Endothelial cell of umbilical vein (primary cell): ENCODE measurements at regions of chr6 and their contacts with region 1.

Region 1: GRCh38 chr6:41182069-41183034 is 18.6 kb downstream of the TREML2 start:
- DNase-seq: peak; percentile 73
- H3K4me3 ChIP-seq: no peak overlapping the region
- H3K27ac ChIP-seq: no peak overlapping the region
- H3K4me1 ChIP-seq: no peaks in the 10 kb centered on the region
- H3K27me3 ChIP-seq: peaks cover under 1 to 2% of the 10 kb centered on the region in 2 experiments
- CTCF ChIP-seq: peak; percentile 67 to 69
- POLR2A ChIP-seq: no peak

Region 2: GRCh38 chr6:41072676-41073623 is 109.4 kb before region 1 on chr6 and contains the start of gene NFYA:
- CTCF ChIA-PET with region 1: interaction called, 13 read pairs
- POLR2A ChIA-PET with region 1: no interaction called
- dilution Hi-C with region 1: no loop called
- intact Hi-C with region 1: no loop called
- DNase-seq: peak; percentile 100
- H3K4me3 ChIP-seq: peak within 1 kb of the TSS; percentile 84 to 97 (median 90)
- H3K27ac ChIP-seq: peak within 1 kb of the TSS; percentile 98
- H3K4me1 ChIP-seq: peaks cover 21% of the 10 kb centered on the region
- H3K27me3 ChIP-seq: no peaks in the 10 kb centered on the region
- CTCF ChIP-seq: peak; percentile 11 to 29
- POLR2A ChIP-seq: peak; percentile 72
- total RNA-seq, gene NFYA: 29.0 and 30.9 TPM in 2 replicates

Region 3: GRCh38 chr6:41092421-41093140 is 89.8 kb before region 1 on chr6:
- CTCF ChIA-PET with region 1: interaction called, 89 read pairs
- POLR2A ChIA-PET with region 1: no interaction called
- dilution Hi-C with region 1: no loop called
- intact Hi-C with region 1: loop called (anchors 1 kb)
- DNase-seq: peak; percentile 36
- H3K4me3 ChIP-seq: no peak overlapping the region
- H3K27ac ChIP-seq: no peak overlapping the region
- H3K4me1 ChIP-seq: peaks cover 16% of the 10 kb centered on the region
- H3K27me3 ChIP-seq: no peaks in the 10 kb centered on the region
- CTCF ChIP-seq: peak; percentile 9 to 39
- POLR2A ChIP-seq: no peak

Region 4: GRCh38 chr6:41100871-41101287 is 81.5 kb before region 1 on chr6:
- CTCF ChIA-PET with region 1: interaction called, 15 read pairs
- POLR2A ChIA-PET with region 1: no interaction called
- dilution Hi-C with region 1: no loop called
- intact Hi-C with region 1: loop called (anchors 1 kb)
- DNase-seq: no peak
- H3K4me3 ChIP-seq: no peak overlapping the region
- H3K27ac ChIP-seq: no peak overlapping the region
- H3K4me1 ChIP-seq: peaks cover 29% of the 10 kb centered on the region
- H3K27me3 ChIP-seq: no peaks in the 10 kb centered on the region
- CTCF ChIP-seq: no peak
- POLR2A ChIP-seq: no peak

Region 5: DNA sequence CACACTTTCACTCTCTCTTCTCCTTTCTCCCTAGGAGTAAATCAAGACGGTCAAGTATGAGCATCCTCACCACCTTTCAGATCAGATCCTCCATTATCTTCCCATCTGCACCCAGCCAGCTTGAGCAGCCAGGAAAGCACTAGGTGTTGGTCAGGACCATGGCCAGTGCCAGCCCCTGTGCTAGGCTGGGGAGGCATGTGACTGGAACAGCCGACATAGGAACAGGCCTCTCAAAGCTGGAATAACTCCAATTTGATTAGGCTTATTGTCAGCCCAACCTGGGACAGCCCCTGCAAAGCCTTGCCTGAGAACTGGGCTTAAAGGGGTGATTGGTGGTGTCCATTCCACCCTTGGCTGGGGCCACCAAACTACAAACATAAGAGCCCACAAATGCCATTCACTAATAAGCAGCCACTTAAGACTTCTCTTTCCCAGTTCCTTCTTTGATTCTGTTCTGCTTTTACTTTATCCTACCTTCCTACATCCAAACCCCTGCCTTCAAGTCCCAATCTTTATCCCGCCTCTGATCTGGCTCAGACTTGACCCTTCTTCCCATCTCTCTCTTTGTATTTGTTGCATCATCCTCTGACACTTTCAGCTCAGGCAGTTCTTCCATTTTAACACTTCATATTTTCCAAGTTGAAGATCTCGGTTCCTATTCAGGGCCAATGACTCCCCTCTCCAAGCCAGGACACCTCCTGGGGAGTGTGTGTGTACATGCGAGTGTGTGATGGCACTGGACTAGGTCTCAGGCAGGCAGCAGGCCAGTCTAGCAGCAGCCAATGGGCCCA is 15.0 kb before region 1 on chr6:
- CTCF ChIA-PET with region 1: interaction called, 28 read pairs
- POLR2A ChIA-PET with region 1: no interaction called
- dilution Hi-C with region 1: no loop called
- intact Hi-C with region 1: no loop called
- DNase-seq: peak; percentile 21
- H3K4me3 ChIP-seq: no peak overlapping the region
- H3K27ac ChIP-seq: no peak overlapping the region
- H3K4me1 ChIP-seq: no peaks in the 10 kb centered on the region
- H3K27me3 ChIP-seq: peaks cover 0 to 2% of the 10 kb centered on the region in 2 experiments
- CTCF ChIP-seq: no peak
- POLR2A ChIP-seq: no peak

Region 6: DNA sequence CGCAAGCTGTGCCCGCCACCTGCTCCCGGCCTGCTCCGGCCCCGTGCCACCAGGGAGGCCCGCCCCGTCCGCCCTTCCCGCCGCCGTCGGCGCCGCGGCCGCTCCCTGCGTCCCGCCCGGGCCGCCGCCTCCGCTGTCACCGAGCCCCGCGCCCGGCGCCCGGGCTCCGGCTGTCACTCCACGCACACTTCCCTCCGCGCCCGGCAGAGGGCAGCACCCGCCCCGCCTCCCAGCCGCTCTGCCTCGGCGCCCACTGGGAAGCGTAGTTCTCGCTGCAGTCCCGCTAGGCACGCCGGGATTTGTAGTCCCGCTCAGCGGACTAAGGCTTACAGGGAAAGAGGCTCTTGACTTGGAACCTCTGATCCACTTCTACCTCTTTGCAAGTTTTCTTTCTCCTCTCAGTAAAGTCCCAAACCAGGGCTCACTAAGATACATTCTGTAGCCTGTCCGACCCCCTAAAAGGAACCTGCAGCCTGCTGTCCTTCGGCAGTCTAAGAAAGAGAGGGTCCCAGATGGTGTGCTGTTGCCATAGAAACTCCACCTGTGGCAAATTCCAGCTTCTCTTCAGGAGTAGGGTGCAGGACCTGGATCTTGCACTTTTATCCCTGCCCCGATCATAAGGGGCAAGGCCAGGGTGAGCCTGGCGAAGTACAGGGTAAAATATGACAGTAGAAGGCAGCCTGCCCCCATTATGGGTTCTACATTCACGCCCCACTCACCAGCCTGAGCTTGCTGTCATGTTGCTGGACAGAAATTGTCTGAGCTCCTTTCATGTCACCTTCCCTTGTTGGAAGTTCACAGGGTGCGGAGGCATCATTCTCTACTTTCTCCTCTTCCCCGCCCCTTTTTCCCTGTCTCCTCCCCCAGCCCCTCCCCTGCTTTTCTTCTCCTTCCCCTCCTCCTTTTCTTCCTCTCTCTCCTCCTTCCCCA is 553.3 kb after region 1 on chr6 and contains the start of gene TFEB:
- CTCF ChIA-PET with region 1: no interaction called
- POLR2A ChIA-PET with region 1: no interaction called
- dilution Hi-C with region 1: no loop called
- intact Hi-C with region 1: no loop called
- DNase-seq: peak; percentile 87
- H3K4me3 ChIP-seq: peak within 1 kb of the TSS; percentile 9 to 70 (median 24)
- H3K27ac ChIP-seq: no peak within 1 kb of the TSS
- H3K4me1 ChIP-seq: peaks cover 15% of the 10 kb centered on the region
- H3K27me3 ChIP-seq: no peaks in the 10 kb centered on the region
- CTCF ChIP-seq: peak; percentile 95 to 99
- POLR2A ChIP-seq: no peak
- total RNA-seq, gene TFEB: 4.9 and 5.5 TPM in 2 replicates